ENCODE measurements at regions of chrX and their contacts with region 1.

Region 1: GRCh38 chrX:24479924-24480323 is 14.8 kb downstream of the PDK3 start:
- DNase-seq: peak; percentile 91
- H3K4me3 Mint-ChIP-seq: peak overlapping the region; percentile 66
- H3K27ac Mint-ChIP-seq: peak overlapping the region; percentile 94
- H3K4me1 Mint-ChIP-seq: peaks cover 37% of the 10 kb centered on the region
- H3K27me3 Mint-ChIP-seq: no peaks in the 10 kb centered on the region

Region 2: DNA sequence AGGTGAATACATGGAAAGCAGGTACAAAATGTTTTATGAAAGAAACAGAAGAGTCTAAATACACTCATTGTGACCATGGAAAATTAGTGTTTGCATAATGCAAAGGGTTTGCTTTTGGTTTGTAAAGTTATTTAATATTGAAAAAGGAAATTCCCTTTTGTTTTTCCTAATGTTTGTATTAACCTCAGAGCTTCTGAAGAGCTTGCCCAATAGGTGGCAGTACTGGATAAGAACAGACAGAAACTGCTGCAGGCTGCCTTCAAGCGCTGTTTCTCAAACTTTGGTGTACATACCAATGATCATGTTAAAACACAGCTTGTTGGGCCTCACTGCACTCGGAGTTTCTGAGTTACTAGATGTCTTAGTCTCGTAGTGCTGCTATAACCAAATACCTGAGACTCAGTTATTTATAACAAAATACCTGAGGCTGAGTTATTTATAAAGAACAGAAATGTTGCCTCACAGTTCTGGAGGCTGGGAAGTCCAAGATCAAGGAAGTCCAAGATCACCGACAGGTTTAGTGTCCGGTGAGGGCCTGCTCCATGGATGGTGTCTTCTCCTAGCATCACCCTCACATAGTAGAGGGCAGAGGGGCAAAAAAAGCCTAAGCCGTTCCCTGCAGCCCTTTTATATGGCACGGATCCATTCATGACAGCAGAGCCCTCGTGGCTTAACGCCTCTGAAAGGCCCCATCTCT is 220.2 kb before region 1 on chrX:
- intact Hi-C with region 1: loop called (anchors 10 kb)
- DNase-seq: peak; percentile 74
- H3K4me3 Mint-ChIP-seq: no peak overlapping the region
- H3K27ac Mint-ChIP-seq: no peak overlapping the region
- H3K4me1 Mint-ChIP-seq: peaks cover 19% of the 10 kb centered on the region
- H3K27me3 Mint-ChIP-seq: no peaks in the 10 kb centered on the region

Region 3: DNA sequence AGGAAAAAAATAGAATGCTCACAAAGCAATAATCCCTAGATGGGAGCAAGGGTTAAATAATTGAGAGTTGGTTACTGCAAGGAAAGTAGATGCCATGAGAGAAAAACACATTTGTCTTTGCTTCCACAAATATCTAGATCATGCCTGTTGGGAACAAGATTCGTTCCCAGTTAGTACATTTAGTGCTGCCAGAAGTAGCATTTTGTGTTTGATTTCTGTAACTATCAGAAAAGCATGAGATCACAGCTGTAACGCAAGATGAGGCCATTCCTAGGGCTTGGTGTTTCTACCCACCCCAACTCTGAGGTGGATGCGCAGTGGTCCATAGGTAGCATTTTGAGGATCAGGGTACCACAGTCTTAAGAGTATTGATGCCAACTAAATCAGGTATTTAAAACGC is 35.3 kb before region 1 on chrX:
- intact Hi-C with region 1: no loop called
- DNase-seq: no peak
- H3K4me3 Mint-ChIP-seq: no peak overlapping the region
- H3K27ac Mint-ChIP-seq: no peak overlapping the region
- H3K4me1 Mint-ChIP-seq: no peaks in the 10 kb centered on the region
- H3K27me3 Mint-ChIP-seq: peaks cover 1% of the 10 kb centered on the region

Region 4: DNA sequence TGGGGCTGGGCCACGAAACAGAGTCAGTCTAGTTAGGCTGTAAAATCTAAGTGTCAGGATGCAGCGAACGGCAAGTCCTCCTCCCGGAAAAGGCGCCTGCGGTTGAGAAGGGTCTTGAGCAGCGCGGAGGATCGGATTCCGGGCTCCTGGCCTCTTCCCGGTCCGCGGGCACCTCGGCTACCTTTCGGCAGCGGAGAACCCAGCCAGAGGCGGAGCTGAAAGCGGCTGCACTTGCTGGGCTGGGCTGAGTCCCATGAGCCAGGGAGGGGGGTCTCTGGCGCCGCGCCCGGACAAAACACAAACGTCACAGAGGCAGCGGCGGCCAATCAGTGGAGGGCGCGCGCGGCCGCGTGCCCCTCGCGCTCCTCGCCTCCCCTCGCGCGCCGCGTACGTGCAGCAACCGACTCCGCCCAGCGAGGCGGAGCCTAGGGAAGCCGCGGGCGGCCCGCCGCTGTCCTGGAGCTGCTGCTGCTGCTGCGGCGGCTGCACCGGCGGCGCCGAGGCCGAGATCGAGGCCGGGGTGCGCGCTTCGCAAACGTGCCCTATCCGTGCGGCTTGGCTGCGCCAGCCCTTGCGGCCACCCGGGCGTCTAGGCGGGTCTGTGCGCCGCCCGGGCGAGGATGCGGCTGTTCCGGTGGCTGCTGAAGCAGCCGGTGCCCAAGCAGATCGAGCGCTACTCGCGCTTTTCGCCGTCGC is 14.9 kb before region 1 on chrX and contains the start of gene PDK3:
- intact Hi-C with region 1: loop called (anchors 1 kb)
- DNase-seq: peak; percentile 95
- H3K4me3 Mint-ChIP-seq: peak within 1 kb of the TSS; percentile 84
- H3K27ac Mint-ChIP-seq: peak within 1 kb of the TSS; percentile 91
- H3K4me1 Mint-ChIP-seq: peaks cover 26% of the 10 kb centered on the region
- H3K27me3 Mint-ChIP-seq: no peaks in the 10 kb centered on the region
- total RNA-seq, gene PDK3: 26.3 and 30.7 TPM in 2 replicates

Region 5: DNA sequence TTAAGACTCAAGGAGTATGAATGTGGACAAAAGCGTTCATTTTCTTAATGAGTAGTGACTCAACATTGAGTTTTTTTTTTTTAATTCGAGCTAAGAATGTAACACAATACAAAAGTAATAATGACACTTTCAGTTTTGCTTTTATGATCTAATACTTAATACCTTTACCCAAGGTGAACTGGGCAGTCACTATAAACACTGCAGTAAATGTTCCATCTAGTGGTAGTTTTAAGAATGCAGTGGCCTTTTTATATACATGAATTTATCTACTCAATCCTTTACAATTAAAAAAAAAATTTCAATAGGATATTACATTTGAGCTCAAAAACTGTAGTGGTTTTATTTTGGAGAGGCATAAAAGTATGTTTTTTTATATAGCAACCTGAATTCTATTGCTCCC is 19.1 kb after region 1 on chrX:
- intact Hi-C with region 1: loop called (anchors 2 kb)
- DNase-seq: no peak
- H3K4me3 Mint-ChIP-seq: no peak overlapping the region
- H3K27ac Mint-ChIP-seq: no peak overlapping the region
- H3K4me1 Mint-ChIP-seq: peaks cover 14% of the 10 kb centered on the region
- H3K27me3 Mint-ChIP-seq: no peaks in the 10 kb centered on the region